CD14-positive monocyte (primary cell): ENCODE measurements at regions of chr18 and their contacts with region 1.

Region 1: DNA sequence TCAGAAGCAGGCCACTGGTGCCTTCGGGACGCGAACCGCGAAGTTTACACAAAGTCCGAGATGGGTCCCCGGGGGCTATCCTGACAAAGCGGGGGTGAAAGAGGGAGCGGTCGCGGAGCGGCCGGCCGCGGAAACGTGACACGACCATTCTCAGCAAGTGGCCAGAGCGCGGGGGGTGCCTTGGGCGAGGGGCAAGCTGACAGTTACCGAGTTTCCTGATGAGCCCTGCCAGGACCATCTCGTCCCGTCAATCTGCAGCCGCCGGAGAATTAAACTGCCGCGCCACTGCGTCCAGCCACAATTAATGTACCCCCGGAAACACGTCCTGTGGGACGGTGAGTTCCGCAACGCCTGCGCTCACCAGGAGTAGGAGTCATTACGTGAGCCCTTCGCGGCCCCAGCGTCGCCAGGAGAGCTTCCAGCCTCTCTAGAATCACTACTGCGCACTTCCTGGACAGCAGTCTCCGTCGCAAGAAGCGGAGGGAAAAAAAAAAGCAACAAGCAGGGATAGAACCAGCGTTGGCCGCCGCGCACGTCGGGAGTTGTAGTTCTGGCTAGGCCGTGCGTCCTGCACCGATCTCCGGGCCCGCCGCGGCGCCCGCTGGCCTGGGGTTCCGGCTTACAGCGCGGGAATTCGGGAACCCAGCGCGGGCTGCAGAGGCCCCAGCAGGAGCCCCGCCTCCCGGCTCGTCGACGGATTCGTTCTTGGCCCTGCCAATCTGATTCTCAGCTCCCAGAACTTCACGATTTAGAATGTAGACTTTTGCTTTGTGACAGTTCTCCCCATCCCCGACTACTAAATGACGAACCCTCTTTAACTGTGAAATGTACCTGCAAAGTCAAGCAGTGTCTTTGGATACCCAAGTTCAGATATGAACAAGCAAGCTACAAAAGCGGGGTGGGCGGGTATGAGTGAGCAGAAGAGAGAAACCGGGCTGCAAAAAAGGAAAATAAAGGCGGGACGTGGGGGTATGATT is at the start of gene RTTN:
- DNase-seq: peak; percentile 83 to 91 (median 86)
- H3K4me3 ChIP-seq: peak within 1 kb of the TSS; percentile 69 to 86 (median 84)
- H3K4me3 Mint-ChIP-seq: peak within 1 kb of the TSS; percentile 89 to 98
- H3K27ac ChIP-seq: peak within 1 kb of the TSS; percentile 95 to 97
- H3K27ac Mint-ChIP-seq: peak within 1 kb of the TSS; percentile 98 to 100 (median 99)
- H3K4me1 ChIP-seq: peaks cover 10 to 17% of the 10 kb centered on the region in 2 donors
- H3K4me1 Mint-ChIP-seq: peaks cover 15% of the 10 kb centered on the region
- H3K27me3 ChIP-seq: no peaks in the 10 kb centered on the region
- H3K27me3 Mint-ChIP-seq: peaks cover 2 to 7% (median 3%) of the 10 kb centered on the region in 3 donors
- CTCF ChIP-seq: no peak
- polyA plus RNA-seq, gene RTTN: 0.22 to 2.7 (median 0.25) TPM

Region 2: GRCh38 chr18:70431203-70431624 is 225.5 kb after region 1 on chr18:
- intact Hi-C with region 1: loop called (anchors 5 kb)
- DNase-seq: peak in 2 of 3 donors; percentile 44 to 51
- H3K4me3 ChIP-seq: no peak overlapping the region
- H3K4me3 Mint-ChIP-seq: no peak overlapping the region
- H3K27ac ChIP-seq: no peak overlapping the region
- H3K27ac Mint-ChIP-seq: peak overlapping the region in 3 of 7 donors; percentile 46 to 90 (median 81)
- H3K4me1 ChIP-seq: peaks cover 10 to 23% of the 10 kb centered on the region in 2 donors
- H3K4me1 Mint-ChIP-seq: peaks cover 23% of the 10 kb centered on the region
- H3K27me3 ChIP-seq: no peaks in the 10 kb centered on the region
- H3K27me3 Mint-ChIP-seq: no peaks in the 10 kb centered on the region
- CTCF ChIP-seq: no peak